OCI-LY7 (cell line): ENCODE measurements at regions of chr11 and their contacts with region 1.

Region 1: DNA sequence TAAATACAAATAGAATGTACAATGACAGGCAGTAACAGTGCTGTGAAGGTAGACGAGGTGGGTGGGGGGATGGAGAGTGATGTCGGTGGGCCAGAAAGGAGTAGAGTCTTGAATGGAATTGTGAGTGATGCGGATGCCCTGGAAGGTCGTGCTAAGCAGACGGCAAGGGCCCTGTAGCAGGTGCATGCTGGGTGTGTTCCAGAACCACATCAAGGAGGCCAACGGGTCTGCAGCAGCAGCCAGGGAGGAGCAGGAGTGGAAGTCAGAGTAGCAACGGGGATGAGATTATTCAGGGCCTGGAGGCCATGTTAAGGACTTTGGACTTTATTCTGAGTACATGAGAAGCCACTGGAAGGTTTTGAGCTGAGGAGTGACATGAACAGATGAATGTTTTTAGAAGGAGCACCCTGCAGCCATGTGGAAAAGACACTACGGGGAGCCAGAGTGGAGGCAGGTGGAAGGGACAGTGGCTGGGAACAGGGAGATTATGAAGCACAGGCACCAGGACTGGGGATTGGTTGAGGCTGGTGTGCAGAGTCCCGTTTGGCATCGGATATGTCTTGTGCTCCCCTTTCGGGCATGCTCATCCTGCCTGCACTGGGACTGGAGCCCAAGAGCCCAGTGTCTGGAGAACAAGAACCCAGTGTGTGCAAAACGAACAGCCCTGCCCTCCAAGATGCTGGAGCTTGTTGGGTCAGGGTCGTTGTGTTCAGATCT is 74.1 kb downstream of the COMMD9 start:
- DNase-seq: no peak
- H3K4me3 ChIP-seq: no peak overlapping the region
- H3K27ac ChIP-seq: no peak overlapping the region
- H3K4me1 ChIP-seq: no peaks in the 10 kb centered on the region
- CTCF ChIP-seq: no peak

Region 2: DNA sequence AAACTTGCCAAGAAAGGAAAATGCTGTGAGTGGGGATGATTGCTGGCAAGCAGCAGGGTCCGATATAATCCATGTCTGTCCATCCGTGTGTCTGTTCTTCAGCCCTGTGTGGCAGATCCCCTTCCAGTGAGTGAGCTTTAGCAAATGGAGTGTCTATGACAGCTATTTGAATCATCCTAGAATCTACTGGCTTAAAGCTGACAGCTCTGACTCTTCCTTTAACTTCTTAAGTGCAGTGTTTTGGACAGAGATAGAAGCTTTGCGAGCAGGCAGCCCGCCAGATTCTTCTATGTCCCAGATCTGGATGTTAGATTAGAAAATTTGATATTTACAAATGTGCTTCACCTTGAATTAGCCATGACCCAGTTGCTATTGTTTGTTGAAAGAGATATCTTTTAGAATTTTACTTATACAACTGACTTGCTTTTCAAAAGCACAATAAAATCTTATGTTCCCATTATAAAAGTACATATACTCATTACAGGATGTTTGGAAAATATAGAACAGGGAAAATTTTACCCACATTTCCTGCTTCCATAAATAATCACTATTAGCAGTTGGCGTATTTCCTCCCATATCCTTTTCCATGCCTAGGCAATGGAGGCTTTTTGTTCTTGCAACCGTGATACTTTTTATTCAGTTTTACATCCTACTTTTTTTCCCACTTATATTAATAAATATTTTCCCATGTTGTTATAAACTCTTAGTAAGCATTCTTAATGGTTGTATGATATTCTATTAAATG is 50.5 kb before region 1 on chr11:
- CTCF ChIA-PET with region 1: no interaction called
- POLR2A ChIA-PET with region 1: no interaction called
- intact Hi-C with region 1: loop called (anchors 5 kb)
- DNase-seq: no peak
- H3K4me3 ChIP-seq: no peak overlapping the region
- H3K27ac ChIP-seq: no peak overlapping the region
- H3K4me1 ChIP-seq: no peaks in the 10 kb centered on the region
- CTCF ChIP-seq: no peak